Posterior cingulate gyrus (tissue), 11 donors: ENCODE measurements at regions of chr2 and their contacts with region 1.

Region 1: GRCh38 chr2:167212014-167212648 is 323.9 kb downstream of the XIRP2 start:
- DNase-seq: peak in 3 of 10 donors; percentile 6 to 43 (median 12)

Region 2: GRCh38 chr2:166539340-166540162 is 672.6 kb before region 1 on chr2:
- intact Hi-C with region 1: loop called (anchors 5 kb)
- DNase-seq: peak in 6 of 10 donors; percentile 4 to 69 (median 14)